GM10248 (cell line): ENCODE measurements at regions of chr15 and their contacts with region 1.

Region 1: DNA sequence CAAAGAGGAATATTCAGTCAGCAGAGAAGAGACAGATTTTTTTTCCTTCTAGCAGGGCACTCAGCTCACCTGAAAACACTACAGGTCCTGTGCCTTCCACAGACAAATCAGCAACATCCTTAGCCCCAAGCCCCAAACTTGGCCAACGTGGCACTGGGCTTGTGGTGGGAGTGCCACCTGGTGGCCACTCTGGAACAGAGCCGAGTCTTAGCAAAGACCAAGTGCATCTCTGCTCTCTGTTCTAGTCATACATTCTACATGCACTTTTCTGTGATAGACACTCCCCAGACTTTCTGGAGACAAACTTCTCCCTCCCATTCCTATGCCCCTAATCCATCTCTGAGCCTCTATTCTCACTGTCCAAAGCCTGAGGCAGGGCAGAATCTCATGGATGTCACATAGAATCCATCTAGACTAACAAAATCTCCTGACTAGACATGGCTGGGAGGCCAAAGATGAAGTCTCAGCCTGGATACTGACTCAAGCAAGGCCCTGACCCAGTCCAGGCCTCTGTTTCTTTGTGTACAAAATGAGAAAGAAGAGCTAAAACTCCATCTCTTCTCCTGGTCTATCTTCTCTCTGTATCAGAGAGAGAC is 5.1 kb upstream of the SEMA7A start:
- DNase-seq: peak; percentile 83
- CTCF ChIP-seq: peak; percentile 94

Region 2: GRCh38 chr15:74389241-74390048 is 49.4 kb before region 1 on chr15:
- CTCF ChIA-PET with region 1: interaction called, 827 read pairs
- POLR2A ChIA-PET with region 1: interaction called, 4 read pairs
- DNase-seq: no peak
- CTCF ChIP-seq: no peak

Region 3: DNA sequence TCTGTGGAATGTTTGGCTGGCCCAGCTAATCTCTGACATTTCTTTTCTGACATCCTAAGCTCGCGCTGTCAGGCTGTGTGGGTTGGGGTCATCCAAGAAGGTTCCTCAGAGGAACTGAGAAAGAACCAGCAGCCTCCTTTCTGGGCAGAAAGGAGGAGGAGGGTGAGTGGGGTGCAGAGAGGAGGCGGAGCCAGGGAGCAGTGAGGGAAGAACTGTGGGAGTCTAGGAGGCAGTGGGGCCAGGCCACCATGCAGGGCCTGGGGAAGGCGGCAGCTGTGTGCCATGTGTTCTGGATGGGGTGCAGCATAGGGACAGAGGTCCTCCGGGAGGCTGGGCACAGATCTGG is 10.4 kb before region 1 on chr15:
- CTCF ChIA-PET with region 1: interaction called, 36 read pairs
- POLR2A ChIA-PET with region 1: no interaction called
- DNase-seq: no peak
- CTCF ChIP-seq: no peak

Region 4: GRCh38 chr15:74453925-74454763 is 15.3 kb after region 1 on chr15:
- CTCF ChIA-PET with region 1: interaction called, 41 read pairs
- POLR2A ChIA-PET with region 1: no interaction called
- DNase-seq: no peak
- CTCF ChIP-seq: no peak

Region 5: GRCh38 chr15:74460871-74461846 is 22.3 kb after region 1 on chr15 and contains the start of gene UBL7:
- CTCF ChIA-PET with region 1: interaction called, 19 read pairs
- POLR2A ChIA-PET with region 1: no interaction called
- DNase-seq: peak; percentile 96
- CTCF ChIP-seq: peak; percentile 47